A549 (cell line): ENCODE measurements at regions of chr12 and their contacts with region 1.

Region 1: DNA sequence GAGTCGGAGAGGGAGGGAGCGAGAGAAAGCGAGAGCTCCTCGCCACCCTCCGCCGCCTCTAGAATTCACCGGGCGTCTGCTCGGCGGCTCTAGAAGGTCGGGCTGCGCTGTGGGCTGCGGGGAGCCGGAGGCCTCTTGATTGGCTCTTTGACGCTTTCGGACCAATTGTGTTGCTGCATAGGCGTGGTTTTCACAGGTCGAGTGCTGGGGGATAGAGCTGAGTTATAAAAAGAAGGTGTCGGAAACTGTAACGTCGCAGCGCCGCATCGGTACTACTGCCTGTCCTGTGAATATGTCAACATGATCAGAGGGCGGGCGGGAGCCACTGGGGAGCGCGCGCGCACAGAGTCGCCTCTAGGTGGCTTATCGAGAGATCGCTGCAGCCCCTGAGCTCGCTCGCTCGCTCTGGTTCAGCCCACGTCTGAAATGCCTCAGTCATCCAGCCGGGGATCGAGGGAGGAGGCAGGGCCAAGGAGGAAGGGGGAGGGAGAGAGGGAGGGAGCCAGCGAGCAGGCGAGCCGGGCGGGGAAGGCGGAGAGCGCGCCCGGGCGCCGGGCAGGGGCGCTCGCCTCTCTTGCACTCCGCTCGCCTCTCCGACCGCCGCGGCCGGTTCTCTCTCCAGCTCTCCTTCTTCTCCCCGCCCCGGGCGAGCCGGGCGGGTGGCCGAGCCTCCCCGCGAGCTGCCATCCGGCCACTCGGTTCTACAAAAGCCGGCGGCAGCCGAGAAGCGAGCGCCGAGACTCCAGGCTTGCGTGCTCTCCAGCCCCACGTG is at the start of gene TBX3:
- DNase-seq: peak; percentile 97 to 100
- ATAC-seq: peak; percentile 88 to 92
- H3K4me3 ChIP-seq: peak within 1 kb of the TSS; percentile 57
- H3K27ac ChIP-seq: peak within 1 kb of the TSS; percentile 96 to 100
- H3K4me1 ChIP-seq: peaks cover 15% of the 10 kb centered on the region
- CTCF ChIP-seq: peak; percentile 58
- EP300 ChIP-seq: no peak
- POLR2A ChIP-seq: peak; percentile 91
- RAD21 ChIP-seq: peak; percentile 50 to 77
- polyA plus RNA-seq, gene TBX3: 23.7 and 28.0 TPM in 2 replicates

Region 2: DNA sequence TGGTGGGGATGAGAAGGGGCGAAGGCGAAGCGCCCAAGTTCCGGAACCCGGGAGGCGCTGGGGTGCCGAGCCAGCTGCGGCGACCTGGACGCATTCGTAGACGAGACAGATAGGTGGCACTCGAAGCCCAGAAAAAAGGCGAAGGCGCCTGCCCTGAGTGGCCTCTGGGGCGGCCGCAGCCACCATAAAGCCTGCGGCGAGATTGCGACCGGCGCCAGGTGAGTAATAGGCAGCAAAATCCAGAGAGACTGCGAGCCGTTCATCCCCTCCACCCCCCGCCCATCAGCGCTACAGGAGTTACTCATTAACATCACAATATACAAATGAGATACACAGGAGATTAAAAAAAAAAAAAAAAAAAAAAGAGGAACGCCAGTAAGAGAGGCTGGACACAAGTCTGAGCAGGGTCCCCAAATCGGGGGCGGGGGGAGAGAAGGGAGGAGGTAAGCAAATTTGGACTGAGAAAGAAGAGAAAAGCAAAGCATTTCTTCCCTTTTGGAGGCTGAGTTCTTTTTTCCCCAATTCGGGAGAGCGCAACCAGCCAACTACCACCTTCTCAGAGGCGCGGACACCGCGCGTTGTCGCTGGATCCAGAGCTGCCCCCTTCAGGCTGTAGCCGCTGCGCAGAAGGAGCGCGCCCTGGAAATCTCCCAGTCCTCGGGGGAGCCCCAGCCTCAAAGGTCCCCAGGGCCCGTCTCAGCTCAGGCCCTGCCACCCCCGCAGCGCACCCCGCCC is 16.0 kb before region 1 on chr12:
- CTCF ChIA-PET with region 1: interaction called, 19 read pairs
- POLR2A ChIA-PET with region 1: interaction called, 39 read pairs
- DNase-seq: peak; percentile 91 to 94
- ATAC-seq: peak; percentile 85 to 93
- H3K4me3 ChIP-seq: peak overlapping the region; percentile 57
- H3K27ac ChIP-seq: peak overlapping the region; percentile 84 to 92
- H3K4me1 ChIP-seq: peaks cover 22% of the 10 kb centered on the region; the same call in 2 of the 3 replicates
- CTCF ChIP-seq: peak; percentile 63
- EP300 ChIP-seq: no peak
- POLR2A ChIP-seq: no peak
- RAD21 ChIP-seq: peak; percentile 89 to 96

Region 3: GRCh38 chr12:114913871-114914801 is 229.9 kb after region 1 on chr12:
- CTCF ChIA-PET with region 1: interaction called, 6 read pairs
- POLR2A ChIA-PET with region 1: interaction called, 33 read pairs
- DNase-seq: peak; percentile 44 to 82
- ATAC-seq: peak; percentile 11 to 45; a peak in 3 of 6 replicates
- H3K4me3 ChIP-seq: no peak overlapping the region
- H3K27ac ChIP-seq: peak overlapping the region; percentile 77 to 86
- H3K4me1 ChIP-seq: peaks cover 58% of the 10 kb centered on the region
- CTCF ChIP-seq: no peak
- EP300 ChIP-seq: peak in 1 of 2 experiments; percentile 53; a peak in 3 of 5 replicates
- POLR2A ChIP-seq: no peak
- RAD21 ChIP-seq: peak; percentile 14 to 31; a peak in 2 of 5 replicates

Region 4: DNA sequence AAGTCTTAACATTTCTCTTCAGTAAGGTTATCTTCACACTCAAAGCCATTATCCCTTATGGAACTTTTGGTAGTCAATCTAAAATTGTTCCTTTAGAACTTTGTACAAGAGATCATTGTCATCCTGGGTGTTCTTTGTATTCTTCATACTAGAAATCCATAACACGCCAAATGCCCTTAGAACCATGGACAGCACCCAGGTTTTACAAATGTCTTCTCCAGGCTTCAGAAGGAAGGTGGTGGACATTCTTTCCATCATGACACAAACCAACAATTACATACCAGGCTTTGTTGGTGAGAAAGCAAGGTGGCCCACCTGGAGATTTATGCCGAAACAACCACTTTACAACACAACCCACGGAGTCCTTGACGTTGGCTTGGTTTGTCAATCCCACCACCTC is 365.3 kb after region 1 on chr12:
- CTCF ChIA-PET with region 1: no interaction called
- POLR2A ChIA-PET with region 1: no interaction called
- DNase-seq: no peak
- ATAC-seq: no peak
- H3K4me3 ChIP-seq: no peak overlapping the region
- H3K27ac ChIP-seq: no peak overlapping the region
- H3K4me1 ChIP-seq: no peaks in the 10 kb centered on the region
- CTCF ChIP-seq: no peak
- EP300 ChIP-seq: no peak
- POLR2A ChIP-seq: no peak
- RAD21 ChIP-seq: no peak

Region 5: DNA sequence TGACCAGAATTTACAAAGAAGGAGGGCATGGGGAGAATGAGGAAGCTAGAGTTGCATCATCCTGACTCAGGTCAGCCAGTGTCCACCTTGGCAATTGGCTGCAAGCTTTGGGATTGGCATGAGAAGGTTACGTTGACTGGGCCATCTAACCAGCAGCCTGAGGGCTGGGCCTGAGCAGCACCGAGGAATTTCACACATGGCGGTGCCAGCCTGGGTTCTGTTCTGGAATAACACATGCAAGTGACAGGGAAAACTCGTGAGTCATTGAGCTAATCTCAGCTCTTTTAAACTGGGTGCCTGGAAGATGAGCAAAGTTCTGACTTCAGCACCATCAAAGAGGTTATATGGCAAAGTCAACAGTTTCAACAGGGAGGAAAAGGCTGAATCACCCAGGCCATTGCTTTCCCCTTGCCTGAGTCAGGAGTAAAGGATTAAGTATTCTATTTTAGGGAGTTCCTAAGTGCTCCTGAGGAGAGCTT is 542.9 kb after region 1 on chr12:
- CTCF ChIA-PET with region 1: interaction called, 8 read pairs
- POLR2A ChIA-PET with region 1: interaction called, 21 read pairs
- DNase-seq: peak; percentile 85 to 90
- ATAC-seq: peak; percentile 95 to 96
- H3K4me3 ChIP-seq: no peak overlapping the region
- H3K27ac ChIP-seq: peak overlapping the region; percentile 61 to 81
- H3K4me1 ChIP-seq: peaks cover 33% of the 10 kb centered on the region
- CTCF ChIP-seq: no peak
- EP300 ChIP-seq: peak; percentile 66 to 77; a peak in 2 of 5 replicates
- POLR2A ChIP-seq: no peak
- RAD21 ChIP-seq: peak in 1 of 2 experiments; percentile 30

Region 6: DNA sequence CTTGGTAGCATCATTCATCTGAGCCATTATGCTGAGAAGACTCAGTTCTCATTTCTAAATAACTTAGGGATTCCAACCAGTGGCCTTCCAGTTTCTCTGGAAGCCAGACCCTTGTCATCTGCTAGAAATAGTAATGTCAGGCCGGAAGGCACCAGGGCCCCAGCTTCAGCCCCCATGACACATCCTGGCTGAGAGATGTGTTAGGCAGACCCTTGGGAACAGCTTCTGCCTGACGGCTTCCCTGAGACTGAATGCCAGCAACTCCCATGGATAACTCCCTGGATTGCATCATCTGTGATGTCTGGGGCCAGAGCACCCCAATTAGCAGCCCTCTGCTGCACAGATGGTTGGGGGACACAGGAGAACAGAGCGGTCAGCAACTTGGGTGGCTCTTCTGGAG is 583.2 kb after region 1 on chr12:
- CTCF ChIA-PET with region 1: no interaction called
- POLR2A ChIA-PET with region 1: no interaction called
- DNase-seq: no peak
- ATAC-seq: no peak
- H3K4me3 ChIP-seq: no peak overlapping the region
- H3K27ac ChIP-seq: no peak overlapping the region
- H3K4me1 ChIP-seq: peaks cover 1% of the 10 kb centered on the region; the same call in 1 of the 3 replicates
- CTCF ChIP-seq: no peak
- EP300 ChIP-seq: no peak
- POLR2A ChIP-seq: no peak
- RAD21 ChIP-seq: no peak

Region 7: GRCh38 chr12:115354007-115354452 is 669.7 kb after region 1 on chr12:
- CTCF ChIA-PET with region 1: no interaction called
- POLR2A ChIA-PET with region 1: interaction called, 21 read pairs
- DNase-seq: peak; percentile 68 to 85
- ATAC-seq: peak; percentile 97
- H3K4me3 ChIP-seq: peak overlapping the region; percentile 38
- H3K27ac ChIP-seq: peak overlapping the region; percentile 87 to 91
- H3K4me1 ChIP-seq: peaks cover 13% of the 10 kb centered on the region
- CTCF ChIP-seq: no peak
- EP300 ChIP-seq: no peak
- POLR2A ChIP-seq: peak; percentile 37
- RAD21 ChIP-seq: peak; percentile 3 to 39; a peak in 2 of 5 replicates

Region 8: DNA sequence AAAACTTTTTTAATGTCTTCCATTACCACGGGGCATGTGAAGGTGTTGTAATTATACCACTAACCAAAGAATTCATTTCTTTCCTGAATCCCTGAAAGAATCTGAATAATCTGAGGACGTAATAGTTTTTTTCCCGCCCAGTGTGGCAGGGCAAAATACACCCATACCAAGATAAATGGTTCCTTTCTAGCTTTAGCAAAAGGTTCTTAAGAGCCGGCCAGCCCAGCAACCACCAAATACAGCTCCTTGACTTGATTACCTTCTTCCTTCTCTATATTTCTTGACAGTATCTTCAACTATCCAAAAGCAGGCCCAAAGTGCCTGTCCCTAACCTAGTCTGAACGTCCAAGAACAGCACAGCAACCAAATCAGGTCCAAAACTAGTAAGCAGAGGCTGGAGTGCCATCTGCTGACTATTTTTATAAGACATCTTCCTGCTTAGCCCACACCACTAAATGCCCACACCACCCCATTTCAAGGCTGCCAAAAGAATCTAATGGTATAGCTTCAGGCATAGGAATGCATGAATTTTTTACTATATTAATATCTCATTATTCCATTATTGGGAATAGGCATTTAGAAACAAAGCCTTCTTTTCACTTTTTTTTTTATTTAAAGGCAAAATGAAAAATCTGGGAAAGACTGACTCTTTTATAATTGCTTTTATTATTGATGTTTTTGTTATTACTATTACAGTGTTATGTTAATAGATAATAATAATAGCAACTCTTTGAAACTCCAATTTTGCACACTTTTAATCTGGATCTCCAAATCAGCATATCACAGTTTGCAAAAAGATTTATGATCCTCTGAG is 1068.8 kb after region 1 on chr12:
- CTCF ChIA-PET with region 1: interaction called, 15 read pairs
- POLR2A ChIA-PET with region 1: interaction called, 9 read pairs
- DNase-seq: peak; percentile 58 to 74
- ATAC-seq: peak; percentile 98
- H3K4me3 ChIP-seq: no peak overlapping the region
- H3K27ac ChIP-seq: peak overlapping the region in 1 of 2 experiments; percentile 7; a peak in 1 of 6 replicates
- H3K4me1 ChIP-seq: peaks cover 7% of the 10 kb centered on the region; the same call in 2 of the 3 replicates
- CTCF ChIP-seq: peak; percentile 82
- EP300 ChIP-seq: no peak
- POLR2A ChIP-seq: no peak
- RAD21 ChIP-seq: peak; percentile 92 to 94